BJ (cell line): ENCODE measurements at regions of chr15 and their contacts with region 1.

Region 1: DNA sequence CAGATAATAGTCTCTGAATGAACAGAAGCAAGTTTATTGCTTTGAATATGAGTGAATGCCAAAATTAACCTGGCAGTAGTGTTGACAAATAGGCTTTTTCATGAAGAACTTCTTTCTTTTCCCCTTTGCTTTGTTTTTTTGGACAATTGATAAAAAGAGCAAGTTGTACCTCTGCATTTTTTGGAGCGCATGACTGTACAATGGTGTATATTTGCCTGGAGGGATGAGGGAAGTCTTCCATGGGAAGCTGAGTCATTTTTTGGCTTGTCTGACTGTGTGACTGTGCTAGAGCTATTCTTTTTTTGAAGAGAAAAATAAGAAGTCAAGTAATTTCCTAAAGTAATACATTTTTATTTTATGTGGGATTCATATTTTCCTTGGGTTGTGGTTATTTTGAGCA is 186.9 kb downstream of the KLHL25 start:
- DNase-seq: peak; percentile 62
- H3K4me3 ChIP-seq: no peak overlapping the region
- H3K27me3 ChIP-seq: no peaks in the 10 kb centered on the region
- CTCF ChIP-seq: no peak

Region 2: DNA sequence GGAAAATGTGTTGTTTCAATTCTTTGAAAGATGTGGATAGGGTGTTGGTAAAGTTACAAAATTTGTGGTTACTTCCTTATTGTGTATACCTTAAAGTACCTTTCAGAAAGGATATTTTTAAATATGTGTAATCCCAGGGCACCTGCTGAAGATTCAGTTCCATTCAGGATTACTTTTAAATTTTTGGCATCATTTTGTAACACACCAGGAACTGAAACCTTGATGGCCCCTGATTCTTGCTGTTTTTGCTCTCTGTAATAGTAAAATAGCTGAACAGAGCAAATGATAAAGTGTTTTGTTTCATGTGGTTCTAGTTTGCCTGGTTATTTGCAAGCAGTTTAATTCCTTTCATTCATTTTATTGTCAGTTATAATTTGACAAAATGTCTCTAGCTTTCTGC is 26.0 kb after region 1 on chr15:
- CTCF ChIA-PET with region 1: interaction called, 3 read pairs
- POLR2A ChIA-PET with region 1: interaction called, 12 read pairs
- DNase-seq: no peak
- H3K4me3 ChIP-seq: no peak overlapping the region
- H3K27me3 ChIP-seq: no peaks in the 10 kb centered on the region
- CTCF ChIP-seq: no peak